HEK293T (cell line): ENCODE measurements at regions of chr5 and their contacts with region 1.

Region 1: GRCh38 chr5:137888857-137889759 is at the start of gene PKD2L2:
- DNase-seq: peak; percentile 89

Region 2: DNA sequence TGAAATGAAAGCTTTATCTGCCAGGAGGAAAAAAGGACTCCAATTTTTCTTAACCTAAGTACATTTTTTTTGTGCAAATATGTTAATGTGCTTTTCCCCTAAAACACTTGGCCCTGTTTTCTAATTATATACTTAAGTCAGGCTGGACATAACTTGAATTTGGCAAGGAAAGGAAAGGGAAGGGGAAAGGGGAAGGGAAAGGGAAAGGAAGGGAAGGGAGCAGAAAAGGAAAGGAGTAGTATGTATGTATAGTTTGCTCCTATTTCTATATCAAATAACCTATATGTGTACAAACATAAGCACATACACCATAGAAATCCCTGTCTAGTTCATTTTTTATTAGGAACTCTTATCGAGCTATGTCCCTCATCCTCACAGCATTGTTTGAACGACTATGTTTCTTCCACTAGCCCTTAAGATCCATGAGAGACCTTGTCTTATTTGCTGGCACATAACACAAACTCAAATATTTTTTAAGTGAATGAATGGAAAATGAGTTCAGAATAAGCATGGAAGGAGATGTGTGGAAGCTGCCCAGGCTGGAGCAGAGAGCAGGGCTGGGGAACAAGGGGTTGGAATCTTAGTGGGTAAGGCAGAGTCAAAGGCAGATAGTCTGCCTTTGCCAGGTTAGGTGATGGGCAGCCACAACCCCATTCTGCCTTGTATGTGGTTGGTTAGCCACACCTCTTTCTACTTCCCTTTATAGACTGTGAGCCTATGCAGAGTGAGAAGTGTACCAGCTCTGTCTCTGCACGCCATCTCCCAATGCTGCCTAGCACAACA is 223.2 kb before region 1 on chr5:
- CTCF ChIA-PET with region 1: no interaction called
- POLR2A ChIA-PET with region 1: no interaction called
- DNase-seq: no peak

Region 3: GRCh38 chr5:137845472-137845871 is 43.6 kb before region 1 on chr5:
- CTCF ChIA-PET with region 1: no interaction called
- POLR2A ChIA-PET with region 1: interaction called, 12 read pairs
- DNase-seq: no peak

Region 4: GRCh38 chr5:137862251-137862650 is 26.9 kb before region 1 on chr5:
- CTCF ChIA-PET with region 1: no interaction called
- POLR2A ChIA-PET with region 1: interaction called, 13 read pairs
- DNase-seq: no peak

Region 5: GRCh38 chr5:137872466-137872865 is 16.6 kb before region 1 on chr5:
- CTCF ChIA-PET with region 1: interaction called, 7 read pairs
- POLR2A ChIA-PET with region 1: interaction called, 14 read pairs
- DNase-seq: no peak